Ascending aorta (tissue), 2 donors: ENCODE measurements at regions of chr5 and their contacts with region 1.

Region 1: DNA sequence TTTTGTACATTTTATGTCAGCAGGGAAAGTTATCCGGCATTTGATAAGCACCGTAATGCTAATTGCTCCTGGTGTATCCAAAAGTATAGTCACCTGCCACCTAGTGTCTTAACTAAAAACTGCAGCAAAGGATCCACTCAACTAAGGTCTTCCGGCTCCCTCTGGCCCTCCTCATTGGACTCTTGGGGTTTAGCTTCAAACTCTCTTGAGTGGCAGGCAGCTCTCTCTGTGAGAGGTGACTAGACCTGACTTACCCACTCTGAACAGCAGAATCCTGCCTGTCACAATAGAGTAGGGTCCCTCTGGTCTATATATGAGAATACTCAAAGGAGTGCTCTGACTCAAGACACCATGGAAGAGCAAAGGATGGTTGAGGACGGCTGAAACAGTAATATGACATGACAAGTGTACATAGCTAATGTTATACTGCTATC is 60.3 kb upstream of the CAST start:
- DNase-seq: no peak
- H3K4me3 ChIP-seq: peak overlapping the region in 1 of 2 donors; percentile 29
- H3K27ac ChIP-seq: no peak overlapping the region
- H3K4me1 ChIP-seq: no peaks in the 10 kb centered on the region
- H3K27me3 ChIP-seq: no peaks in the 10 kb centered on the region
- CTCF ChIP-seq: peak; percentile 75 to 86 (median 85)

Region 2: GRCh38 chr5:95382801-95383200 is 1219.0 kb before region 1 on chr5:
- intact Hi-C with region 1: no loop called
- DNase-seq: no peak
- H3K4me3 ChIP-seq: no peak overlapping the region
- H3K27ac ChIP-seq: no peak overlapping the region
- H3K4me1 ChIP-seq: no peaks in the 10 kb centered on the region
- H3K27me3 ChIP-seq: no peaks in the 10 kb centered on the region
- CTCF ChIP-seq: no peak

Region 3: DNA sequence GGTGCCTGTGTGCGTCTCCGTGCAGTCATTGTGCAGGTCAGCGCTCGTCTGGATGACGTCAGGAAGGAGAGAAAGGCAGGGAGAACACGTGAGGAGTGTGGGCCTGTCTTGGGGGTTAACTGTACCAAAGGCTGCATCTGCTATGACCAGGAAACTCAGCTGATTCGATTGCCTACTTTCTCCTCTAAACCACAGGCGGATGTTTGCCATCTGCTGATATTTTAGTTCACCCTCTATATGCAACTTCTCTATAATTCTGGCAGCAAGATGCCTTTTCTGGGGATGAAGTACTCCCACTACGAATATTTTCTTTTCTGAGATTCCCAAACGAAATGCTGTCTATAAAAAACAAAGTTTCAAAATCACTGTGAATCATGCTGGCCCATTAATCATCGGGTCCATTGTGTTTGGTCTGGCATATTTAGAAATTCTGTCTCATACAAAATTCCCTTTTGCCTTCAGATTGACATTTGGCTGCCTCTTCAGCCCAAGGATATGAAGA is 193.5 kb before region 1 on chr5:
- intact Hi-C with region 1: loop called (anchors 5 kb)
- DNase-seq: no peak
- H3K4me3 ChIP-seq: no peak overlapping the region
- H3K27ac ChIP-seq: peak overlapping the region in 1 of 2 donors; percentile 32
- H3K4me1 ChIP-seq: no peaks in the 10 kb centered on the region
- H3K27me3 ChIP-seq: no peaks in the 10 kb centered on the region
- CTCF ChIP-seq: no peak

Region 4: DNA sequence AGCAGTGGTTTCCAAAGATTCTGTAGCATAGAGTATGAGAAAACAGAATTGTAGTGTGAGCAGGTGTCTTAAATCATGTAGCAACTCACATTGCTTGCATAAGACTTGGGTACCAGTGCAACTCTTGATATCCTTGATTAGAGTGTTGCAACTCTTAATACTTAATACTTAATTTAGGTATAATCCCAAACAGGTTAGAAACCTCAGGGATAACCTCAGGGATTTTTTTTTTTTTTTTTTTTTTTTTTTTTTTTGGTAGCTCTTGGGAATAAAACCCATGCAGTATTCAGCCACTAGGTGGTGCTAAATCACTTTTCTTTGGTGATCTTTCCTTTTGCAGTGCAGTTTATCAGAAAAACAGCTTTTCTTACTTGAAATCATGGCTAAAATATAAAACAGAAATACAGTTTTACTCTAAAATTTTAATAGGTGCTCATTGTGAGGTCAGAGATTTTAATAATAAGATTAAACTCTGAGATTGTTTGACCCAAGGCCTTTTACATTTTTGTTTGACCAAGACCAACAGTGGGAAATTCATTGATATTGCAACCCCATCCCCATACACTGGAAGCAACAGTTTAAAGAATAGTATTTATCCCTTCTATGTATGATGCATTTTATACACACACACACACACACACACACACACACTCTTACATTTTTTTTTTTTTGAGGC is 150.7 kb after region 1 on chr5:
- intact Hi-C with region 1: no loop called
- DNase-seq: no peak
- H3K4me3 ChIP-seq: no peak overlapping the region
- H3K27ac ChIP-seq: peak overlapping the region in 1 of 2 donors; percentile 29
- H3K4me1 ChIP-seq: no peaks in the 10 kb centered on the region
- H3K27me3 ChIP-seq: no peaks in the 10 kb centered on the region
- CTCF ChIP-seq: peak in 2 of 3 experiments; percentile 54 to 68

Region 5: DNA sequence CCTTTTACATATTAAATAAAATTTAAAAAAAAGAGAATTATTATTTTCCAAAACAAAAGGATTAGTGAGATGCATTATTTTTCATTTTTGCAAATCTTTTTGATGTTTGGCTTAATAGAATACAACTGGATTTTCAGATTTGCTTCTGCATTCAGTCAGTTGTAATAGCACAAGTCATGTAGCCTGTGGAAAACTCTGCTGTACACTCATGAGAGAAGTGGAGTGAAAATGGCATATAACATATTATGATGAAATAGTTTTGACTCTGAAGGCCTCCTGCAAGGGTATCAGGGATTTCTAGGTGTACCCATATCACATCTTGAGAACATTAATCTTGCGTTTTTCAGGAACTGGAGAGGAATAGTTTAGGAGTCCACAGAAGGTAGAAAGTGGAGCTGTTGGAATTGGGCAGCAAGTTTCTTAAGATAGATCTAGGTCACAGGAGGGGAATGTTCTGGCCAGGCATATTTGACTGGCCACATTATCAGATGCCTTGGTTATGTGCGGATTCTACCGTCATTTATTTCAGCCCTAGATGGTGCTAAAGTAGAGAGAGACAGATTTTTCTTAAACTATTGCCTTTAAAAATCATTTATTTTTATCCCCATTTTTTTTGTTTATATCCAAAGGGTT is 350.4 kb after region 1 on chr5:
- intact Hi-C with region 1: no loop called
- DNase-seq: no peak
- H3K4me3 ChIP-seq: no peak overlapping the region
- H3K27ac ChIP-seq: peak overlapping the region; percentile 84 to 86
- H3K4me1 ChIP-seq: peaks cover 0 to 5% of the 10 kb centered on the region in 2 donors
- H3K27me3 ChIP-seq: no peaks in the 10 kb centered on the region
- CTCF ChIP-seq: peak in 1 of 3 experiments; percentile 27